ENCODE measurements at regions of chr7 and their contacts with region 1.

Region 1: DNA sequence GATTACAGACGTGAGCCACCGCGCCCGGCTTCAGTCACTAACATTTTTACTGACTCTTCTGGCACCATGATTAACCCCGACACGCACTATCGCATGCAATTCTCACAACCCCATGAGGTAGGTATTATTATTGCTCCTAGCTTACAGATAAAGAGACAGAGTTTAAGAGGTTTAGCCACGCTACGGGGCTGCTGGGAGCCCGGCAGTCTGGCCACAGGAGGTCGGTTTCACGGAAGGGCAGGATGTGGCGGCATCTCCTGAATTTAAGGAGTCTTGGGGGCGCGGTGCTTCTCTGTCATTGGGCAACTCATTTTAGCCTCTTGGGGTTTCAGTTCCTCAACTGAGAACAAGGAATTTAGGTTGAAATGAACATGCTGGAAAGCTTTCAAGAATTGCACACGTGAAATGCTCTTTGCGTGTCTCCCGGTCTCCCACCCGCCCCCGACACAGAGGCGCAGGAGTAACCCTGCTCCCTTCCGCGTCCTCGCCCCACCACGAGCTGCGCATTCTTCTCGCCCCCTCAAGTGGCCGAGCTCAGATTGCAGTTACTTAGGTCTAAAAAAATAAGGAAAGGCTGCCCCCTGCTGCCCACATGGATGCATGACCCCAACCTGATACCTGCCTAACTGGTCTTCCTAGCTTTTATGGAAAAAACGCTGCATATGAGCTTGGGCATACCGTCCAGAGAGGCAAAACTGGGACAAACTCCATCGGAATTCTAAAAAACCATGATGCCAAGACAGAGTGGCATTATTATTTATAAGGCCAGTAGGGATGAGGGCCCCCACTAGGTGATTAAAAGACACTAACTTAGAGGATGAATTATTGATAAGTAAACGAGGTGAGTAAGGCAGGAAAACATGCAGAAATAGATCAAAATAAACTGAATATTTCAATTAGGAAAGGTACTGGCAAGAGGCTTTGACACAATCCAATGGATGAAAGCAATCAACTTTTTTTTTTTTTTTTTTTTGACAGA is 12.4 kb downstream of the PRSS2 start:
- DNase-seq: peak; percentile 89
- ATAC-seq: peak; percentile 87 to 93

Region 2: GRCh38 chr7:142632291-142633134 is 150.7 kb before region 1 on chr7:
- intact Hi-C with region 1: loop called (anchors 2 to 10 kb)
- DNase-seq: peak; percentile 44
- ATAC-seq: peak; percentile 50 to 76

Region 3: DNA sequence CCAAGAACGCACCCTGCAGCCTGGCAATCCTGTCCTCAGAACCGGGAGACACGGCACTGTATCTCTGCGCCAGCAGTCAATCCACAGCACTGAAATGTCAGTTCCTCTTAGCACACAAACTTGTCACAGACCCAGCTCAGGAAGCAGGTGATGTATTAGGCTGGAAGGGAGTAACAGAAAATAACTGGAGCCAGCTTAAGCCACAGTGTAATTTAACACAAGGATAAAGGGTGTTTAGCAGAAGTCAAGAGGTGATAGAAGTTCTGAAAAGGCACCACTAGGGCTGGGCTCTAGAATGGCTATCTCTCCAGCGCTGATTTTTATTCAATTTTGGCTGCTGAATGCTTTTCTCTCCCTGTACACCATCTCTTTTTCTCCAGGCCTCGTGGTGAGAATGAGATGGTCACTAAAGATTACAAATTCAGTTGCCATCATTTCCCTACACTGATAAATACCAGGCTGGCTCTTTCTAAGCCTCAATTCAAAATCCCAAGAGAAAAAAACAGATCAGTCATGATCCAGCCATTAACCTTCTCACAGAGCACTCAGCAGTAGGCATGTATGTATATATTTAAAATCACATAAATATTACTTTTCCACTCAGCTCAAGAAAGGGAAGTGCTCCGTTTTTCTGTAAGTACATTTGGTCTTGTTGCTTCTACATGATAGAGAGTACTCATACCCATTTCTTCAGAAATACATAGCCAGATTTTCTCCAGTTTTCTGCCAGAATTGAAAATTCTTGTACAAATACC is 136.6 kb before region 1 on chr7:
- intact Hi-C with region 1: no loop called
- DNase-seq: no peak
- ATAC-seq: no peak

Region 4: GRCh38 chr7:142711746-142712619 is 71.2 kb before region 1 on chr7:
- intact Hi-C with region 1: loop called (anchors 1 to 5 kb)
- DNase-seq: no peak
- ATAC-seq: no peak

Region 5: DNA sequence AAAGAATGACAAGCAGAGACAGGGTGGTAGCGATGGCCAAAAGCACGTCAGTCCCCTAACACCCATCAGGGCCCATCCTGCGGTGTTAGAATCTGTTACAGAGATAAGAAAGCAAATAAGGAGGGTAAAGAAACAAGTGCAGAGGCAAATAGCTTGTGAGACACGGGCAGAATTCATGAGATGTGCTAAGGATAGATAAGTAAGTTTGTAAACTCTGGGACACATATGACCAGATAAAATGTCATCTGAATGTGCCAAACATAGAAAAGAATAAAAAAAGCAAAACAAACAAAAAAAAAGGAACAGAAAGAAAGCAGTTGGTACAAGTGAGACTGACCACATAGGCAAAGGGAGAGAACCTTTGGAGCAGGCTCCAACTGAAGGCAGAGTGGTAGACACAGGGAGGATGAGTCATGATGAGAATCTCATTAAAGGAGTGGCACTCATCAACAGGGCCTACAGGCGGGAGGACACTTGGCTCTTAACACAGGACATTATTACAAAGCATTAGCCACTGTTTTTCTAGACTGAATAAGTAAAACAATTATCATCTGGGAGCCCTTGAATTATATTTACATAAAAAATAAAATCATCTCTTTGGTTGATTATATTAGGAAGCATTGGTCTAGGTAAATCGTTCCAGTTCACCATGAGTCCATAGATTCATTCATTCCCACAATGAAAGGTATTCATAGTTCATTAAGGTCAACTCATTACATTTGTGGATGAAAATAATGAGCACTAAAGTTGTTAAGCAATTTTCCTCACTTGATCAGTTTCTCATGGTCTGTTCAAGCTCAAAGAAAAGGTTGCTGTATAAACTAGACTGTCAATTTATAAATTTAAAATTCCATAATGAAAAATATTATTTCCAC is 50.2 kb after region 1 on chr7:
- intact Hi-C with region 1: no loop called
- DNase-seq: no peak
- ATAC-seq: peak in 1 of 2 donors; percentile 73